WTC11 (cell line): ENCODE measurements at regions of chr19 and their contacts with region 1.

Region 1: GRCh38 chr19:15555759-15556633 is 47.7 kb downstream of the CYP4F22 start:
- DNase-seq: peak; percentile 99
- ATAC-seq: peak; percentile 89
- H3K4me3 Mint-ChIP-seq: peak overlapping the region; percentile 61
- H3K27ac Mint-ChIP-seq: peak overlapping the region; percentile 79
- H3K4me1 Mint-ChIP-seq: peaks cover 6% of the 10 kb centered on the region
- H3K27me3 Mint-ChIP-seq: peaks cover 41% of the 10 kb centered on the region
- CTCF ChIP-seq: peak; percentile 83

Region 2: GRCh38 chr19:15154002-15154612 is 401.9 kb before region 1 on chr19:
- CTCF ChIA-PET with region 1: interaction called, 17 read pairs
- POLR2A ChIA-PET with region 1: no interaction called
- DNase-seq: peak; percentile 82
- ATAC-seq: peak; percentile 75
- H3K4me3 Mint-ChIP-seq: no peak overlapping the region
- H3K27ac Mint-ChIP-seq: no peak overlapping the region
- H3K4me1 Mint-ChIP-seq: no peaks in the 10 kb centered on the region; the same call in 1 of the 2 replicates
- H3K27me3 Mint-ChIP-seq: peaks cover 3% of the 10 kb centered on the region; the same call in 1 of the 2 replicates
- CTCF ChIP-seq: peak; percentile 55

Region 3: DNA sequence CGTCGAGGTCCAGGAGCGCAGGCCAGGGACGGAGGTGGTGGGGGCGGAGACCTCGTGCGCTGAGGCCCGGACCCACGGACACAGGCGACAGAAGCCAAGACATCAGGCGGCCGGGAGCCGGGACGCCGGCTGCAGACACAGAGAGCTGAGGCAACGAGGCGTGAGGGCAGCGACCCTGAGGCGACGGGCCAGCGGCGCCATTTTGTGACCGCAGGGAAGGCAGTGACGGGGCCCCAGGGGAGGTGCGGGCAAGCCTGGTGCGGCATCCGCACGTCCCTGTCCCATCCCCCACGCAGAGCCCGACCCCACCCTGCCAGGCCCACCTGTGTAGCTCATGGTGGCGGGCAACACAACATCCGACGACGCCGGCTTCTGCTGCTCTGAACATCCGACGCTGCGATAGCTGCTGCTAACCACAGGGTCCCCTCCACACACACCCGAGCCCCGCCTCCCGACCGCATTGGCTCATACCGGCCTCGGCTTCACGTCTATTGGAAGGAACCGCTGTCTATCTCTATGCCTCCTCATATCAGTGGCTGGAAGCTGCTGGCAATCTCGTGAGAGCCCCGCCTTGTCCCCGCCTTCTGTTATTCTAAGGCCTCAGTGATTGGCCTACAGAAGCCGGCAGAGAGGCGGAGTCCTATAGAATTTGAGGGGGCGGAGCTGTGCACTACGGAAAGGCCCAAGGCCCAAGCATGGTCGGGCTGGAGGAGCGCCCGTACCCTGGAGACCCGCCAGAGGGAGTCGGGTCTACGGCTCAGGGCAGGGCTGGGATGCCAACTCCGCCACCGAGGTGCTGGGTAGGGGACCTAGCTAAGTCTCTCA is 137.2 kb before region 1 on chr19 and contains the start of gene AKAP8L:
- CTCF ChIA-PET with region 1: interaction called, 128 read pairs
- POLR2A ChIA-PET with region 1: interaction called, 10 read pairs
- DNase-seq: peak; percentile 99
- ATAC-seq: peak; percentile 97
- H3K4me3 Mint-ChIP-seq: peak within 1 kb of the TSS; percentile 95
- H3K27ac Mint-ChIP-seq: peak within 1 kb of the TSS; percentile 94
- H3K4me1 Mint-ChIP-seq: peaks cover 14% of the 10 kb centered on the region
- H3K27me3 Mint-ChIP-seq: no peaks in the 10 kb centered on the region
- CTCF ChIP-seq: no peak
- total RNA-seq, gene AKAP8L: 184 to 231 TPM (median 184 TPM) in 3 replicates

Region 4: DNA sequence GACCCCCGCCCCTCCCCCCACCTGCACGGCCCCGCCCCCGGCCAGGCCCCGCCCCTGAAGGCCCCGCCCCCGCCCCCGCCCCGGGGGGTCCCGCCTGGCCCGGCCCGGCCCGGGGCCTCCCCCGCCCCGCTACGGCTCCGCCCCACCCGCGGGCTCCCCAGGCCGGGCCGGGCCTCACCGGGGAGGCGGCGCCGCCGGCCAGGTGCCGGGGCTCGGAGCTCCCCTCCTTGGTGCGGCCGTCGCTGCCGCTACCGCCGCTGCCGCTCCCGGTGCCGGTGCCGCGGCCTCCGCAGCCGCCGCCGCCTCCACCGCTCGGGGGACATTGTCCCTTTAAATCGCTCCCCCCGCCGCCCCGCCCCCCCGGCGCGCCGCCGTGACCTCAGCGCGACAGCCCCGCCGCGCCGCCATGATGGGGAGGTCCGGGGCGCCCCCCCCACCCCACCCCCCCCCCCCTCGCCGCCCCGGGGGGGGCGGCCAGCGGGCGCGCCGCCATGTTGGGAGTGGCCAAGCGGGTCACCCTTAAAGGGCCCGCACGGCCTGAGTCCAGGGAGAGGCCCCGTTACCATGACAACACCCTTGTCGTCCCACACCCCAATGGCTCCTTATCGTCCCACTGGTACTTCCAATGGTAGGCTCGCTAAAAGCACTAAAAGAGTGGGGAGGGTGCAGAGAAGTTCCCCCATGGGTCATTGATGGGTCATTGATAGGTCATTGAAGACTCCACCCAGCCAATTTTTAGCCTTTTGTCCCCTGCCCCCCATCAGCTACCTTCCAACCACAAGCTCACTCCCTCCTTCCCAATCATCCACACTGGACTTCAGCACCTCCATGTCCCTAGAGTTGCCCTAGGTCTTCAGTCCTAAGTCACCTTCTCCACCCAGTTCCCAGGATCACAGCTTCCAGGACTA is 106.1 kb before region 1 on chr19 and contains the start of gene WIZ:
- CTCF ChIA-PET with region 1: interaction called, 23 read pairs
- POLR2A ChIA-PET with region 1: interaction called, 6 read pairs
- DNase-seq: peak; percentile 80
- ATAC-seq: 0 out of 2 replicates have a peak, but pooled peaks have one; percentile 0
- H3K4me3 Mint-ChIP-seq: peak within 1 kb of the TSS; percentile 75
- H3K27ac Mint-ChIP-seq: no peak within 1 kb of the TSS; the same call in 1 of the 2 replicates
- H3K4me1 Mint-ChIP-seq: peaks cover 16% of the 10 kb centered on the region
- H3K27me3 Mint-ChIP-seq: peaks cover 43% of the 10 kb centered on the region
- CTCF ChIP-seq: no peak
- total RNA-seq, gene WIZ: 37.6 to 43.9 TPM (median 40.6 TPM) in 3 replicates

Region 5: GRCh38 chr19:15479391-15480345 is 76.3 kb before region 1 on chr19 and contains the start of gene PGLYRP2:
- CTCF ChIA-PET with region 1: interaction called, 27 read pairs
- POLR2A ChIA-PET with region 1: no interaction called
- DNase-seq: peak; percentile 33
- ATAC-seq: peak; percentile 63; the same call in 1 of the 2 replicates
- H3K4me3 Mint-ChIP-seq: no peak within 1 kb of the TSS
- H3K27ac Mint-ChIP-seq: no peak within 1 kb of the TSS
- H3K4me1 Mint-ChIP-seq: no peaks in the 10 kb centered on the region
- H3K27me3 Mint-ChIP-seq: peaks cover 4% of the 10 kb centered on the region
- CTCF ChIP-seq: no peak
- total RNA-seq, gene PGLYRP2: not detected in 3 replicates

Region 6: GRCh38 chr19:15595069-15595468 is 39.1 kb after region 1 on chr19:
- CTCF ChIA-PET with region 1: no interaction called
- POLR2A ChIA-PET with region 1: no interaction called
- DNase-seq: no peak
- ATAC-seq: no peak
- H3K4me3 Mint-ChIP-seq: no peak overlapping the region
- H3K27ac Mint-ChIP-seq: no peak overlapping the region
- H3K4me1 Mint-ChIP-seq: no peaks in the 10 kb centered on the region
- H3K27me3 Mint-ChIP-seq: peaks cover 12% of the 10 kb centered on the region
- CTCF ChIP-seq: no peak

Region 7: GRCh38 chr19:15614507-15615379 is 58.7 kb after region 1 on chr19 and contains the start of gene CYP4F8:
- CTCF ChIA-PET with region 1: no interaction called
- POLR2A ChIA-PET with region 1: no interaction called
- DNase-seq: no peak
- ATAC-seq: no peak
- H3K4me3 Mint-ChIP-seq: no peak within 1 kb of the TSS
- H3K27ac Mint-ChIP-seq: no peak within 1 kb of the TSS
- H3K4me1 Mint-ChIP-seq: no peaks in the 10 kb centered on the region
- H3K27me3 Mint-ChIP-seq: peaks cover 10% of the 10 kb centered on the region; the same call in 1 of the 2 replicates
- CTCF ChIP-seq: no peak
- total RNA-seq, gene CYP4F8: not detected in 3 replicates